Activated CD8-positive, alpha-beta T cell treated with anti-CD3 and anti-CD28 coated beads for 36 hours (primary cell): ENCODE measurements at regions of chr10 and their contacts with region 1.

Region 1: DNA sequence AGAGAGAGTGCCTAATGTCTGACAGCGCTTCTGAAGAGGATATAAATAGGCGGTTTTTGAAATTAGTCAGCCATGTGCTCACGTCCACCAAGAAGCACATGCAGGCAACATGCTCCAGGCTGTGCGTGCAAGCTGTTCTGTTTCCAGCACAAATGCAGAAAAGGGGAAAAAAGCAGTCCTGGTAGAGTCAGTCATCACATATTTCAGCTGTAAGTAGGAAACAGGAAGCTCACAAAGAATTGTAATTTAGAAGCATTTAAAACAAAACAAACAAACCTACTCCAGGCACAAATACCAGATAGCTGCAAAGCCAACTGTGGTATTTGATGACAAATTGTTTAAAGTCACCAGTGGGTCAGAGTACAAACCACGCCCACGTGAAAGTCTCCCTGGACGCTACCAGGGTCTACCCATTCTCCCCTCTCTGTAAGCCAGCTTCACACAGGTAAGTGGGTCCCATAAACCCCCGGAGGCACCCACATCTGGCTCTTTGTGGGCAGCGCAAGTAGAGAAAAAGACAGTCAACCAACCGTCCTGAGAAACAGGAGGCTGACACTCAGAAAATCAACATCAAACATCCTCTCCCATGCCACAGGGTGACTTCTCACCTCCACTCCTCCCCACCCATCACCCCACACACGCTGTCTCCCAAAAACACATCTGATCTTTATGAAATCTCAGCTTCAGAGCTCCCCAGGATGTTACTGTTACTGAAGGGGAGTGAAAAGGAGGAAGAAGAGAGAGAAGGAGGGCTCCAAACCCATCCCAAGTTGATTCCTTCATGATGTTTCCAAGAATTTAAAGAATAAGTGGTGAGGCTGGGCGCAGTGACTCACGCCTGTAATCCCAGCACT is 186.4 kb downstream of the FAM107B start:
- DNase-seq: peak; percentile 78
- ATAC-seq: peak; percentile 57
- H3K4me3 Mint-ChIP-seq: peak overlapping the region; percentile 52
- H3K27ac Mint-ChIP-seq: peak overlapping the region; percentile 97
- H3K4me1 Mint-ChIP-seq: peaks cover 90% of the 10 kb centered on the region
- H3K27me3 Mint-ChIP-seq: no peaks in the 10 kb centered on the region
- CTCF ChIP-seq: no peak

Region 2: DNA sequence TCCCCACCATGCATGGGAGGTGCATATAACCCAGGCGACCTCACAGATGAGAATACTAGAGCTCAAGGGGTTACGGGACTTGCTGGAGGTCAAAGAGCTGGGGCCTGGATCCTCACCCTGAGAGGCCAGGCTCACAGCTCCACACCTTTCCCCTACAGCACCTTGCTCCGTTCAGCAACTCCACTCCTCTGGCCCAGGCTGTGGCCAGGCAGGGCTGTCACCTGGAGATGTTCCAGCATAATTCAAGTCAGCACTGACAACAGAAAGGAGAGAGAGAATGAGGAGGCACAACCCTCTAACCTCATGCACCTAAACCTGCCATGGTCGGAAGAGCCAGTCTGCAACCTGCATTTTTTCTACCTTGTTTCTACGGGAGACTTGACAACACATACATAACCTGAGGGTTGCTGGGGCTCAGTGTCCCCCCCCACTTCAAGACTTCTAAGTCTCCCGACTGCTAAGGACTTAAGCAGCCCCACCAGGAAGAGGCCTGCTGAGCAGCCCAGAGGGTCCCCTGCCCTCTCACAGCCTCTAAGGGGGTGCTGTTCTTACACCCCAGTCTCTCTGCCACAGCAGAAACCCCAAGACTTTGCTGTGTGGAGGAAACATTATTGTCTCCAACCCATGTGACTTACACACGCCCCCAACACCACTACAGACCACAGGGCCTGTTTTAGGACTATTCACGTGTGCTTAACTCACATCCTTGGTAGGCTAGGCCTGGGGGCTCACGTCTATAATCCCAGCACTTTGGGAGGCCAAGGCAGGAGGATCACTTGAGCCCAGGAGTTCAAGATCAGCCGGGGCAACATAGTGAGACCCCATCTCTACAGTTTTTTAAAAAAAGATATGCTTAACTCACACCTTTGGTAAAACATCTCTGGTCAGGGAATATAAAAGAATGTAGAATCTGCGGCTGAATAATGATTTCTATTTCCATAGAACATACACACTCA is 10.8 kb after region 1 on chr10:
- CTCF ChIA-PET with region 1: interaction called, 11 read pairs
- POLR2A ChIA-PET with region 1: interaction called, 17 read pairs
- intact Hi-C with region 1: loop called (anchors 2 kb)
- DNase-seq: peak; percentile 35
- ATAC-seq: peak; percentile 11
- H3K4me3 Mint-ChIP-seq: no peak overlapping the region
- H3K27ac Mint-ChIP-seq: peak overlapping the region; percentile 24
- H3K4me1 Mint-ChIP-seq: peaks cover 72% of the 10 kb centered on the region
- H3K27me3 Mint-ChIP-seq: no peaks in the 10 kb centered on the region
- CTCF ChIP-seq: no peak